ENCODE measurements at regions of chr1 and their contacts with region 1.

Region 1: GRCh38 chr1:225999227-225999911 is at the start of gene SDE2:
- H3K4me3 ChIP-seq: peak within 1 kb of the TSS; percentile 68
- H3K27ac ChIP-seq: peak within 1 kb of the TSS; percentile 87
- H3K4me1 ChIP-seq: peaks cover 38% of the 10 kb centered on the region
- CTCF ChIP-seq: no peak; the same call in 1 of the 2 replicates

Region 2: DNA sequence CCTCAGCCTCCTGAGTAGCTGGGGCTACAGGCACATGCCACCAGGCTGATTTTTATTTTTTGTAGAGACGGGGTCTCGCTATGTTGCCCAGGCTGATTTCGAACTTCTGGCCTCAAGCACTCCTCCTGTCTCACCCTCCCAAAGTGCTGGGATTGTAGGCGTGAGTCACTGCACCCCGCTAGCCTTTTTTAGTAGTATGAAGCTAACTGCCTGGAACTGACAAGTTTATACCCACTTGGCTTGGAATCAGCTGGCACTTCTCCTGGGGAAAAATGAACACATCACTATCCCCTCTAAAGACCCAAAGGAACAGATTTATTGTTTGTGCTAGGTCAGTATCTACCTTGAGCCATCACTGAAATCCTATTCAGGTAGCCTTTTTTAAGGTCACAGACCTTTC is 136.2 kb before region 1 on chr1:
- CTCF ChIA-PET with region 1: no interaction called
- POLR2A ChIA-PET with region 1: no interaction called
- H3K4me3 ChIP-seq: no peak overlapping the region
- H3K27ac ChIP-seq: no peak overlapping the region
- H3K4me1 ChIP-seq: 0 out of 2 replicates have a peak, but pooled peaks cover 3% of the 10 kb centered on the region
- CTCF ChIP-seq: no peak

Region 3: DNA sequence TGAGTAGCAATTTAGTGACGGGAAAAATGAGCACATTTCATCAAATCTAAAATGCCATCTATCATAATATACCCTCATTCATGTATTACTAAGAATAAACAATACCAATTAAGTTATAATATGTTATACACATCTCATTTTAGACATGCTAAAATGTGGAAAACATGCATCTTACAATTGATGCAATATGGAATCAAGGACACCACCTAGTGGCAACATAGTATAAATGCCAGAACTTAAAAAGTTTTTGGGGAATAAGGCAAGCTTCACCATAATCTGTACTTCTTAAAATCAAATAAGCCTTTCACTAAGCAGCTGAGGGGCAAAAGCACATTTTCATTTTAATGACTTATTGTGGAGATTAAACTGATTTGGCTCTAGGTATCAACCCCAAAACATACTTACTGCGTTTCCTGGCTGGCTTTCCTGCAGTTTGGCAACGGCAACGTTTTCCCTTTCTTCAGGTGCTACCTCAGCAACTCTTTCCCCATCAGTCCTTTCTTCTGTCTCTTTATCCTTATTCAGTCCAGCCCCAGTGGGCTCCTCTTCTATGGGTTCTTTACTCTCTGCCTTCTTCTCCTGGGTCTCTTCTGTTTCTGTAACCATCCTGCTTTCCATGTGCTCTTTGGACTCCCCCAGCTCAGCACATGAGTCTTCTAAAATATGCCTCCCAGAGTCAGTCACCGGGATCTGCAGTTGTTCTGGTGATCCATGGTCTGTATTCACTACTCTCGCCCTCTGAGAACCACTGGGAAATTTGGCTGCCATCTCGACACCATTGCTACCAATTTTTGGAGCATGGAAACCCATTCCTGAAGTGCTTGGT is 11.7 kb before region 1 on chr1:
- CTCF ChIA-PET with region 1: interaction called, 56 read pairs
- POLR2A ChIA-PET with region 1: interaction called, 12 read pairs
- H3K4me3 ChIP-seq: no peak overlapping the region
- H3K27ac ChIP-seq: no peak overlapping the region
- H3K4me1 ChIP-seq: no peaks in the 10 kb centered on the region
- CTCF ChIP-seq: peak; percentile 53; the same call in 1 of the 2 replicates

Region 4: DNA sequence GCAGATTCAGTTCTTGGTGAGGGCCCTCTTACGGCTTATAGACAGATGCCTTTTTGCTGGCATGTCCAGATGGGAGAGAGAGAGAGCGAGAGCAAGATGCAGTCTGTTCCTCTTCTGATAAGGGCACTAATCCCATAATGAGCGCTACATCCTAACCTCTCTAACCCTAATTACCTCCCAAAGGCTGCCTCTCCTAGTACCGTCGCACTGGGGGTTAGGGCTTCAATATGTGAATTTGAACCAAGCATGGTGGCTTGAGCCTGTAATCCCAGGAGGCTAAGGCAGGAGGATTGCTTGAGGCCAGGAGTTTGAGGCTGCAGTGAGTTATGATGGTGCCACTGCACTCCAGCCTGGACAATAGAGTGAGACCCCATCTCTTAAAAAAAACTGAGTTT is 10.3 kb after region 1 on chr1:
- CTCF ChIA-PET with region 1: interaction called, 3 read pairs
- POLR2A ChIA-PET with region 1: interaction called, 12 read pairs
- H3K4me3 ChIP-seq: no peak overlapping the region
- H3K27ac ChIP-seq: no peak overlapping the region
- H3K4me1 ChIP-seq: no peaks in the 10 kb centered on the region
- CTCF ChIP-seq: no peak